ENCODE measurements at regions of chr14 and their contacts with region 1.

Region 1: GRCh38 chr14:69580009-69580577 is 5.4 kb upstream of the CCDC177 start:
- DNase-seq: no peak
- ATAC-seq: no peak
- H3K4me3 ChIP-seq: no peak overlapping the region
- H3K4me3 Mint-ChIP-seq: no peak overlapping the region
- H3K27ac ChIP-seq: no peak overlapping the region
- H3K27ac Mint-ChIP-seq: no peak overlapping the region
- H3K4me1 ChIP-seq: no peaks in the 10 kb centered on the region
- H3K4me1 Mint-ChIP-seq: peaks cover 4% of the 10 kb centered on the region in 2 donors
- H3K27me3 ChIP-seq: peaks cover 2% of the 10 kb centered on the region
- H3K27me3 Mint-ChIP-seq: peaks cover 16 to 17% of the 10 kb centered on the region in 2 donors
- CTCF ChIP-seq: no peak

Region 2: DNA sequence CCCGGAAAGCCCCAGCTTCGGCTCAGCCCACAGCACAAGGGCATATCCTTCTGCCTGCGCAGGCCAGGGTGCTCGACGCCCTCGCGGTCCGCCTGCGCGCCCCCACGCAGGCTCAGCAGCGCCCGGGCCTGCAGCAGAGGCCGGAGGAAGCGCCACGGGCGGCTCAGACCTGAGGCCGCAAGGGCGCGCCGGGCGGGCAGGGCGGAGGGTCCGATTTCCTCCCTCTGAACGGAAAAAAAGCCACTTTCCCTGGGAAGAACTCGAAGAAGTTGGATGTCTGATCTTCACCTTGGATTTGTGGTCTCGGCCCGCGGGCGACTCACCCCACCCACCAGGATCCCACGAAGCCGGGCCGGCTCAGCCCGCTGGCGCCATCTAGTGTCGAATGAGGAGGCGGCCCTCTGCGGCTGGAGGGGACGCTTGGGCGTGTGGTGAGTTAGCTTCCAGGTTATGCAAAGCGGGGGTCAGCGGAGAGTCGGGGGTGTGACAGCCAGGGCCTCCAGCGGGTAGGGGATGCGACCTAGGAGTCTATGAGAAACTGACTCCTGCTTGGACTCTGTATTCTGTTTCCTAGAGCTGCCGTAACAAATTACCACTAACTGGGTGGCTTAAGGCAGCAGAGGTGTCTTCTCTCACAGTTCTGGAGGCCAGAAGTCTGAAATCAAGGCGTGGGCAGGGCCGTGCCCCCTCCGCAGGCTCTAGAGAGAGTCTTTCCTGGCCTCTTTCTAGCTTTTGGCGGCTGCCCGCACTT is 146.8 kb after region 1 on chr14:
- intact Hi-C with region 1: loop called (anchors 1 kb)
- DNase-seq: peak; percentile 88 to 90
- ATAC-seq: peak; percentile 90 to 95 (median 90)
- H3K4me3 ChIP-seq: peak overlapping the region; percentile 35
- H3K4me3 Mint-ChIP-seq: peak overlapping the region; percentile 68
- H3K27ac ChIP-seq: peak overlapping the region; percentile 66
- H3K27ac Mint-ChIP-seq: peak overlapping the region; percentile 91
- H3K4me1 ChIP-seq: peaks cover 31% of the 10 kb centered on the region
- H3K4me1 Mint-ChIP-seq: peaks cover 39 to 42% of the 10 kb centered on the region in 2 donors
- H3K27me3 ChIP-seq: no peaks in the 10 kb centered on the region
- H3K27me3 Mint-ChIP-seq: no peaks in the 10 kb centered on the region
- CTCF ChIP-seq: peak; percentile 95

Region 3: GRCh38 chr14:70027785-70028428 is 447.8 kb after region 1 on chr14:
- intact Hi-C with region 1: loop called (anchors 10 kb)
- DNase-seq: peak; percentile 63 to 64
- ATAC-seq: peak; percentile 55 to 89 (median 63)
- H3K4me3 ChIP-seq: no peak overlapping the region
- H3K4me3 Mint-ChIP-seq: no peak overlapping the region
- H3K27ac ChIP-seq: no peak overlapping the region
- H3K27ac Mint-ChIP-seq: no peak overlapping the region
- H3K4me1 ChIP-seq: no peaks in the 10 kb centered on the region
- H3K4me1 Mint-ChIP-seq: no peaks in the 10 kb centered on the region
- H3K27me3 ChIP-seq: no peaks in the 10 kb centered on the region
- H3K27me3 Mint-ChIP-seq: peaks cover 0 to 5% of the 10 kb centered on the region in 2 donors
- CTCF ChIP-seq: peak; percentile 71

Measured in natural killer cell (primary cell).